ENCODE measurements at regions of chr22 and their contacts with region 1.

Region 1: DNA sequence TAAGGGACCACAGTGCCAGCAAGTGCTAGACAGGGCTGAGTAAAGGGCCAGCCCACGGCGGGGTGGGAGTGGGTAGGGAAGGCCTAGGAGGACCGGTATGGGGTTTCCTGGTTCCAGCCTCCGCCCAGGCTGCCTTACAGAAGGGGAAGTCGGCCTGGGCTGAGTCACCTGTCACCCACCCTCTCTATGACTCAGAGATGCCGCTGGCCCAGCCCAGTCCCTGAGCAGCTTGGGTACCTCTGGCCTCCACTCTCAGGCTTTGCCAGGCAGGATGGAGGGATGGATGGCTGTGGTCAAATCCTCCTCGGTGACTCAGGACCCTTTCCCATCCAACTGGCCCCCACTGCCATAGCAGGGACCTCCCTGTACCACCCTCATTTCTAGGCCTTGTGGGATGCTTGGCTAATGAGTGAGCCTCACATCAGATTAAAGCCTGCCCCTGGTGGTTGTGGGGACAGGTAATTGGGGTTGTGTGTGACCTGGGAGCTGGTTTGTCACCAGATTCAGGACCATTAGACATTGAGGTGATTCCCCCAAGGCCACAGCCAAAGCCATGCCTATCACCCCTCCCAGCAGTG is 13.9 kb downstream of the SLC35E4 start:
- DNase-seq: peak; percentile 95
- ATAC-seq: peak; percentile 99
- H3K4me3 Mint-ChIP-seq: no peak overlapping the region
- H3K27ac Mint-ChIP-seq: peak overlapping the region; percentile 75
- H3K4me1 Mint-ChIP-seq: peaks cover 32% of the 10 kb centered on the region
- H3K27me3 Mint-ChIP-seq: no peaks in the 10 kb centered on the region

Region 2: GRCh38 chr22:30556388-30556787 is 93.1 kb before region 1 on chr22:
- CTCF ChIA-PET with region 1: no interaction called
- POLR2A ChIA-PET with region 1: no interaction called
- intact Hi-C with region 1: no loop called
- DNase-seq: no peak
- ATAC-seq: no peak
- H3K4me3 Mint-ChIP-seq: no peak overlapping the region
- H3K27ac Mint-ChIP-seq: no peak overlapping the region
- H3K4me1 Mint-ChIP-seq: no peaks in the 10 kb centered on the region
- H3K27me3 Mint-ChIP-seq: no peaks in the 10 kb centered on the region

Region 3: GRCh38 chr22:30615543-30615954 is 34.0 kb before region 1 on chr22:
- CTCF ChIA-PET with region 1: no interaction called
- POLR2A ChIA-PET with region 1: no interaction called
- intact Hi-C with region 1: no loop called
- DNase-seq: no peak
- ATAC-seq: no peak
- H3K4me3 Mint-ChIP-seq: no peak overlapping the region
- H3K27ac Mint-ChIP-seq: no peak overlapping the region
- H3K4me1 Mint-ChIP-seq: no peaks in the 10 kb centered on the region
- H3K27me3 Mint-ChIP-seq: no peaks in the 10 kb centered on the region

Region 4: DNA sequence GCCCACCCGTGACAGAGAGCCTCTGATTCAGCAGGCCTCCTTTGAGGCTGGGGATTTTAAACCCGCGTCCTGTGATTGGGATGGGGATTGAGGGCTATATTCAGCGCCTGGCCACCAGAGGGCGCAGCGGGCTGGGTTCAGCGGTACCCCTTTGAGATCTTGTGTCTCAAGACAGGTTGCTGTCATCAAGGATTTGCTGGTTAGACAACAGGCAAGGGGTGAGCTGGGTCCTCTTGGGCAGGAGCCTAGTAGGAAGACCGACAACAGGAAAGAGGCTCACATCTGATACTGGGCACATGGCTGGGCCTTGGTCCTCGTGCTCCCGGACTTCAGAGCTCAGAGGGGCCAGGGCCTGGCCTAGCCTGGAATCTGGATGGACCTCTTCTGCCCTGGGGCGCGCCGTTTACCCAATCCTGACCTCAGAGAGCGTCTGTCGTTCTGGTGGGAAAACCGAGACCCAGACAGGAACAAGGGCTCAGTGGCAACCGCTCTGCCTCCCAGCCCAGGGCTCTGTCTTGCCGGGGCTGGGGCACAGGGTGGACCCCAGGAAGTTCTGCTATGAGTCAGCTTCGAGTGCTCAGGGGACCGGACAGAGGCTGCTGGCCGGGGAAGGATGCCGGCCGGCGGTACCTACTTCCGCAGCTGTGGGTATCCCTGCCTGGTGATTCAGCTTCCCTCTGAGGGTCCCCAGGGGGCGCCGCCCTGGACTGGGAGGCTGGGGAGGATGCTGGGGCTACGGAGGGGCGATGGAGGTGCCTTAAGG is 14.9 kb before region 1 on chr22:
- CTCF ChIA-PET with region 1: interaction called, 13 read pairs
- POLR2A ChIA-PET with region 1: interaction called, 9 read pairs
- intact Hi-C with region 1: loop called (anchors 1 kb)
- DNase-seq: peak; percentile 95
- ATAC-seq: peak; percentile 77
- H3K4me3 Mint-ChIP-seq: peak overlapping the region; percentile 75
- H3K27ac Mint-ChIP-seq: peak overlapping the region; percentile 84
- H3K4me1 Mint-ChIP-seq: peaks cover 22% of the 10 kb centered on the region
- H3K27me3 Mint-ChIP-seq: no peaks in the 10 kb centered on the region

Region 5: GRCh38 chr22:30694171-30694639 is 44.7 kb after region 1 on chr22:
- CTCF ChIA-PET with region 1: interaction called, 4 read pairs
- POLR2A ChIA-PET with region 1: no interaction called
- intact Hi-C with region 1: loop called in 1 of 2 experiments (anchors 1 kb)
- DNase-seq: peak; percentile 72
- ATAC-seq: peak; percentile 76
- H3K4me3 Mint-ChIP-seq: peak overlapping the region; percentile 79
- H3K27ac Mint-ChIP-seq: peak overlapping the region; percentile 74
- H3K4me1 Mint-ChIP-seq: peaks cover 5% of the 10 kb centered on the region
- H3K27me3 Mint-ChIP-seq: peaks cover 18% of the 10 kb centered on the region

Region 6: GRCh38 chr22:31173386-31174145 is 524.0 kb after region 1 on chr22:
- CTCF ChIA-PET with region 1: no interaction called
- POLR2A ChIA-PET with region 1: no interaction called
- intact Hi-C with region 1: loop called in 1 of 2 experiments (anchors 1 kb)
- DNase-seq: peak; percentile 16
- ATAC-seq: peak; percentile 94
- H3K4me3 Mint-ChIP-seq: peak overlapping the region; percentile 29
- H3K27ac Mint-ChIP-seq: peak overlapping the region; percentile 80
- H3K4me1 Mint-ChIP-seq: peaks cover 41% of the 10 kb centered on the region
- H3K27me3 Mint-ChIP-seq: no peaks in the 10 kb centered on the region

Region 7: DNA sequence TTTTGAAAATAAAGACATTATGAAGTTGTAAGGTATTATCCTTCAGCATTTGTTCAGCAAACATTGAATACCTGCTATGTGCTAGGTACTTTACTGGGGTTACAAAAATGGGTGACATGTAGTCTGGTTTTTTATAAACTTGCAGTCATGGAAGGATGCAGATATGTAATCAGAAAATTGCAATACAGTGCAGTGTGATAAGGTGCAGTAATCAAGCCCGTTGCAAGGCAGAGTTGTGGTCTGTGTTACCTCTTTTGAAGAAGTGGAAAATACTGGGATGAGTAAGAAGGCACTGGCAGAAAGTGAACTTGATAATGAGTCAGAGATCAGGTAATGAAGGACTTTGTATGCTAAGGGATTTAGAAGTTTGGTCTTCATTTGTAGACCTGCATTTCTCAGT is 1833.2 kb after region 1 on chr22:
- CTCF ChIA-PET with region 1: no interaction called
- POLR2A ChIA-PET with region 1: no interaction called
- intact Hi-C with region 1: loop called in 1 of 2 experiments (anchors 10 kb)
- DNase-seq: peak; percentile 61
- ATAC-seq: peak; percentile 90
- H3K4me3 Mint-ChIP-seq: no peak overlapping the region
- H3K27ac Mint-ChIP-seq: no peak overlapping the region
- H3K4me1 Mint-ChIP-seq: peaks cover 25% of the 10 kb centered on the region
- H3K27me3 Mint-ChIP-seq: no peaks in the 10 kb centered on the region

Measured in activated CD4-positive, alpha-beta T cell treated with anti-CD3 and anti-CD28 coated beads for 36 hours (primary cell).